ENCODE measurements at regions of chr21 and their contacts with region 1.

Region 1: DNA sequence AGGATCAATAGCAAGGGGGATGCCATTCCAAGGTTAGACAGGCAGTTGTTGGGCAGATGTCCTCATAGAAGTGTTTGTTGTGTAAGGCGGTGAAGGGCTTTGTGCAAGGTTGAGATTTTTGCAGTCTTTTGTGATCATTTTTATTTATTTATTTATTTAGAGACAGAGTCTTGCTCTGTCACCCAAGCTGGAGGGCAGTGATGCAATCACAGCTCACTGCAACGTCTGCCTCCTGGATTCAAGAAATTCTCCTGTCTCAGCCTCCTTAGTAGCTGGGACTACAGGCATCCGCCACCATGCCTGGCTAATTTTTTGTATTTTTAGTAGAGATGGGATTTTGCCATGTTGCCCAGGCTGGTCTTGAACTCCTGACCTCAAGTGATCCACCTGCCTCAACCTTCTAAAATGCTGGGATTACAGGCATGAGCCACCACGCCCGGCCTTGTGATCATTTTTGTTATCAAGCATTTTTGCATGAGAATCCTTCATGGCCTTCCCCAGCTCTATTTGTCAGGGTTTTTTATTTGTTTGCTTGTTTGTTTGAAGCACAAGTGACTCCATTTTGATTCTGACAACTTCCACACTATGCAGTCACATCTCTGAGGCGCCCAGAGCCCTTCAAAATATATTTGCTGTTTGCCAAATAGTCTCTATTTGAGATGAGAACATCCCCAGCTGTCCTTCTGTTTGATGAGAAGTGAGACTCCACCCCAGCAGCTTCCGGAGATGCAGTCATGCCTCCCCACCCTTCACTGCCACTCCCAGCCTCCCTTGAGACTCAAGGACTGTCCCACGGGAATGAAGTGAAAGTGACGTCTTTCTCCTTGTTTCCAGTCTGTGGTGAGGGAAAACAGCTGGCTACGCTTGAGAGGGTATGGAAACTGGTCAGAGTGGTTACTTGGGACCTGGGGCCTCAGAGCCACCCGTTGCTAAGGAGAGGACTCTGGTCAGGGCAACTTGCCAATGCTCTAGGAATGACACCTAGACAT is 38.0 kb downstream of the TMEM50B start:
- H3K4me3 ChIP-seq: no peak overlapping the region
- H3K27ac ChIP-seq: no peak overlapping the region
- H3K4me1 ChIP-seq: peaks cover 4% of the 10 kb centered on the region; the same call in 1 of the 2 replicates
- CTCF ChIP-seq: no peak

Region 2: GRCh38 chr21:32994305-32994704 is 447.5 kb before region 1 on chr21:
- CTCF ChIA-PET with region 1: interaction called, 13 read pairs
- POLR2A ChIA-PET with region 1: no interaction called
- H3K4me3 ChIP-seq: no peak overlapping the region
- H3K27ac ChIP-seq: no peak overlapping the region
- H3K4me1 ChIP-seq: no peaks in the 10 kb centered on the region
- CTCF ChIP-seq: no peak

Region 3: GRCh38 chr21:33348706-33349105 is 93.1 kb before region 1 on chr21:
- CTCF ChIA-PET with region 1: interaction called, 11 read pairs
- POLR2A ChIA-PET with region 1: no interaction called
- H3K4me3 ChIP-seq: no peak overlapping the region
- H3K27ac ChIP-seq: no peak overlapping the region
- H3K4me1 ChIP-seq: no peaks in the 10 kb centered on the region
- CTCF ChIP-seq: no peak

Region 4: GRCh38 chr21:33374450-33375096 is 67.2 kb before region 1 on chr21:
- CTCF ChIA-PET with region 1: interaction called, 15 read pairs
- POLR2A ChIA-PET with region 1: no interaction called
- H3K4me3 ChIP-seq: no peak overlapping the region
- H3K27ac ChIP-seq: no peak overlapping the region
- H3K4me1 ChIP-seq: peaks cover 3% of the 10 kb centered on the region; the same call in 1 of the 2 replicates
- CTCF ChIP-seq: peak; percentile 39; the same call in 1 of the 2 replicates

Region 5: DNA sequence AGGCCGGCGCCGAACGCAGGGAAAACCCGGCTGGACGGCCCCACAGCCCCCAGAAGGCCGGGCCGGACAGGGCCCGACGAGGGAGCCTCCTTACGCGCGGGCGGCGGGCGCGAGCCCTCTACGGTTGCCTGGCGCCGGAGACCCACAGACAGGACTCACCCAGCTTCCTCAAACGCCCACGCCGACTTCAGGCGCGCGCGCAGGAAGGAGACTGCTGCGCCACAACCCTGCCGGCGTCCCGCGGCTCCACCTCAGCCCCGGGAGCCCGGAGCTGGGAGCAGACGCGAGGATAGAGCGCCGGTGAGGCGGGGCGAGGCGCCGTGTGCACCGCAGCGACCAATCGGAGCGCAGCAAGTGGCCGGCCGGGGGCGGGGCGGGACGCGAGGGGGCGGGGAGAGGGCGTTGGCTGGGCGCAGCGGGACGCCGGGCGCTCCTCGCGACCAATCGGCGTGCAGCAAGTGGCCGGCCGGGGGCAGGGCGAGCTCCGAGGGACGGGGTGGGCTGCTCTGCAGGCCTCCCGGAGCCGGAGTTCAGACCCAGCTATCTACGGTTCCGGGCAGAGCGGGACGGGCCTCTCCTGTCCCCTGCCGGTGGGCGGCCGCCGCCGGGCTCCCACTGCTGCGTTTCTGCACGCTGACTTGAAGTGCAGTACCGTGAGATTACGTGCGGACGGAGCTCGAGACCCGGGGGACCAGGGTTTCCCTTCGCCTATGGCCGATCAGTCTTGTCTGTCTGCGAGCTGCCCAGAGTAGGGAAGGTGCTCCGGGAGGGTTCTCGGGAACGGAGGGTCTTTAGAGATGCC is 38.1 kb after region 1 on chr21 and contains the start of gene TMEM50B:
- CTCF ChIA-PET with region 1: interaction called, 10 read pairs
- POLR2A ChIA-PET with region 1: interaction called, 11 read pairs
- H3K4me3 ChIP-seq: peak within 1 kb of the TSS; percentile 59
- H3K27ac ChIP-seq: peak within 1 kb of the TSS; percentile 87
- H3K4me1 ChIP-seq: peaks cover 2% of the 10 kb centered on the region; the same call in 1 of the 2 replicates
- CTCF ChIP-seq: peak; percentile 98

Region 6: GRCh38 chr21:33668180-33668579 is 226.4 kb after region 1 on chr21:
- CTCF ChIA-PET with region 1: no interaction called
- POLR2A ChIA-PET with region 1: no interaction called
- H3K4me3 ChIP-seq: no peak overlapping the region
- H3K27ac ChIP-seq: no peak overlapping the region
- H3K4me1 ChIP-seq: no peaks in the 10 kb centered on the region
- CTCF ChIP-seq: no peak

Measured in HEK293 (cell line).